ENCODE measurements at regions of chr4 and their contacts with region 1.

Region 1: GRCh38 chr4:185395956-185396723 is 416 bp upstream of the LRP2BP start:
- DNase-seq: peak; percentile 98 to 99 (median 99)
- ATAC-seq: peak; percentile 83 to 93 (median 90)
- H3K4me3 ChIP-seq: peak overlapping the region; percentile 57 to 80 (median 69)
- H3K27ac ChIP-seq: peak overlapping the region; percentile 100
- H3K4me1 ChIP-seq: peaks cover 0 to 8% (median 4%) of the 10 kb centered on the region in 4 donors
- H3K27me3 ChIP-seq: no peaks in the 10 kb centered on the region
- CTCF ChIP-seq: no peak
- POLR2A ChIP-seq: peak; percentile 84

Region 2: GRCh38 chr4:185203486-185204237 is 192.5 kb before region 1 on chr4 and contains the start of gene CFAP97:
- intact Hi-C with region 1: loop called in 1 of 2 experiments (anchors 10 kb)
- DNase-seq: peak; percentile 95 to 97 (median 95)
- ATAC-seq: peak; percentile 81 to 92 (median 86)
- H3K4me3 ChIP-seq: peak within 1 kb of the TSS; percentile 75 to 93 (median 76)
- H3K27ac ChIP-seq: peak within 1 kb of the TSS; percentile 95 to 98 (median 96)
- H3K4me1 ChIP-seq: peaks cover 0 to 34% (median 12%) of the 10 kb centered on the region in 4 donors
- H3K27me3 ChIP-seq: no peaks in the 10 kb centered on the region
- CTCF ChIP-seq: no peak
- POLR2A ChIP-seq: peak; percentile 91
- total RNA-seq, gene CFAP97: 11.7 to 25.6 (median 20.5) TPM

Measured in right lobe of liver (tissue), 6 donors.